Right ventricle myocardium inferior (tissue), 1 donor: ENCODE measurements at regions of chr18 and their contacts with region 1.

Region 1: GRCh38 chr18:27750014-27750413 is 426.9 kb downstream of the CDH2 start:
- DNase-seq: no peak
- ATAC-seq: peak; percentile 67

Region 2: GRCh38 chr18:27605107-27605834 is 144.7 kb before region 1 on chr18:
- intact Hi-C with region 1: loop called (anchors 1 kb)
- DNase-seq: no peak
- ATAC-seq: peak; percentile 84

Region 3: DNA sequence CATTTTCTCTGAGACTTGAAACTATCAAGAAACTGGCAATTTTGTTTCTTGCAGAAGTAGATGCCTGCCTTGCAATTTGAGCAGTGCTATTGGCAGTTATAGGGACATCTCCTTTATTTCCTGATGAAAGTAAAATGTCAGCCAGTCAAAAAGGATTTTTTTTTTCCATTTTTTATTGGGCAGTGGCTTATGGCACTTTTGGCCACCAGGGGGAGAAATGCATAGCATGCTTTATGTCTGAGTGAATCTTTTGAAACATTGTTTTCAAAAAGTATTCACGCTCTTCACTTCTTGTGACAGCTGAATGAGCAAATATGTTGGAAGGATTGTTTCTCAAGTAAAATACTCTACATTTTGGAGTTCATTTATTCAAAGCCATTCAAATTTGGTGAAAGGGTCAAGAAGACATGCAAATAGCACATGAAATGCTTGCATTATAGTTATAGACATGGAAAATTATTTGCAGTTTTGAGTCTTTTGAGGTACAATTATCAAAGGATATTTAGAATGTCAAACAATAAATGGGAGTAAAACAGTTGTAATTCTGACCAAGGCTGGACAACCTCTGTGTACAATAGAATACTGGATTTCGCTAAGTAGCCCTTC is 64.1 kb before region 1 on chr18:
- intact Hi-C with region 1: loop called (anchors 2 kb)
- DNase-seq: no peak
- ATAC-seq: no peak

Region 4: GRCh38 chr18:27699137-27699536 is 50.9 kb before region 1 on chr18:
- intact Hi-C with region 1: no loop called
- DNase-seq: no peak
- ATAC-seq: no peak